WTC11 (cell line): ENCODE measurements at regions of chr3 and their contacts with region 1.

Region 1: GRCh38 chr3:23945903-23946751 is 1.0 kb downstream of the NR1D2 start:
- DNase-seq: peak; percentile 97
- ATAC-seq: peak; percentile 68
- H3K4me3 Mint-ChIP-seq: peak overlapping the region; percentile 87
- H3K27ac Mint-ChIP-seq: peak overlapping the region; percentile 99
- H3K4me1 Mint-ChIP-seq: peaks cover 40% of the 10 kb centered on the region
- H3K27me3 Mint-ChIP-seq: peaks cover 16% of the 10 kb centered on the region
- CTCF ChIP-seq: no peak

Region 2: DNA sequence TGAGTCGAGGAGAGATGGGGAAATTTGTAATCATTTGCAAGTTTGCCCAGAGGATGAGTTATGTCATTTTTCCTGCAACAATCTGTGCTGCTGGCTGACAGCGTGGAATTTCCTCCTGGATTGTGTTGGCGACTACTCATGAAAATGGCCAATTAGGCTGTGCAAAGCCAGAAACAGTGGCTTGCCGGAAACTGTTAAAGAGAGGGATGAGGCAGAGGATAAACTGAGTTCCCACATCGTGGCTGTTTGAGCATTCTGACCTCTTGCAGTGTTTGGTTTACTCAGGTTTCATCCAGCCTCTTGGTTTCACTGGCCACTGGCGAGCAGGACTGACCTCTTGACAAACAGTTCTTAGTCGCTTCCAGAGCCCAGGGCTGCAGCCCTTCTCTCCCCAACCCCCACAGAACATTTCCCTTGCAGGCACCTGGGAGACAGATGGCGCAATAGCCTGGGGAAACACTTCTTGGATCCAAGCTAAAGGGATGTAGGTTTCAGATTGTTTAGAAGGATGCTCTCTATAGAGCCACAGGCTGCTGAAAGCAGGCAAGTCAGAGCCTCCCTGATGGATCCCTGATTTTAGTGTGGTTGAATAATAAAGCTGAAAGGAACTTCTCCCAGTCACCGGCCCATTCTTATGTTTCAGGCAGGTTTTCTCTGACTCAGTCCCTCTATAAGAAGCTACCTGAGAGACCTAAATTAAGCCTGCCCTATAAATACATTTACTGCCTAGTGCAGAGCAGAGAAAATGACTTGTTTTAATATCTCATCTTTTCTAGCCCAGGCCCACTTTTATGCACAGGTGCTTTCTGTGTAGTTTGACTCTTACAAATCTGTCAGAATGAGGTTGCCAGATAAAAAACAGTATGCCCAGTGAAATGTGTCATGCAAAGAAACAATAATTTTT is 233.2 kb before region 1 on chr3:
- CTCF ChIA-PET with region 1: no interaction called
- POLR2A ChIA-PET with region 1: no interaction called
- DNase-seq: peak; percentile 74
- ATAC-seq: peak; percentile 91
- H3K4me3 Mint-ChIP-seq: no peak overlapping the region
- H3K27ac Mint-ChIP-seq: peak overlapping the region; percentile 18
- H3K4me1 Mint-ChIP-seq: peaks cover 40% of the 10 kb centered on the region
- H3K27me3 Mint-ChIP-seq: no peaks in the 10 kb centered on the region
- CTCF ChIP-seq: no peak

Region 3: DNA sequence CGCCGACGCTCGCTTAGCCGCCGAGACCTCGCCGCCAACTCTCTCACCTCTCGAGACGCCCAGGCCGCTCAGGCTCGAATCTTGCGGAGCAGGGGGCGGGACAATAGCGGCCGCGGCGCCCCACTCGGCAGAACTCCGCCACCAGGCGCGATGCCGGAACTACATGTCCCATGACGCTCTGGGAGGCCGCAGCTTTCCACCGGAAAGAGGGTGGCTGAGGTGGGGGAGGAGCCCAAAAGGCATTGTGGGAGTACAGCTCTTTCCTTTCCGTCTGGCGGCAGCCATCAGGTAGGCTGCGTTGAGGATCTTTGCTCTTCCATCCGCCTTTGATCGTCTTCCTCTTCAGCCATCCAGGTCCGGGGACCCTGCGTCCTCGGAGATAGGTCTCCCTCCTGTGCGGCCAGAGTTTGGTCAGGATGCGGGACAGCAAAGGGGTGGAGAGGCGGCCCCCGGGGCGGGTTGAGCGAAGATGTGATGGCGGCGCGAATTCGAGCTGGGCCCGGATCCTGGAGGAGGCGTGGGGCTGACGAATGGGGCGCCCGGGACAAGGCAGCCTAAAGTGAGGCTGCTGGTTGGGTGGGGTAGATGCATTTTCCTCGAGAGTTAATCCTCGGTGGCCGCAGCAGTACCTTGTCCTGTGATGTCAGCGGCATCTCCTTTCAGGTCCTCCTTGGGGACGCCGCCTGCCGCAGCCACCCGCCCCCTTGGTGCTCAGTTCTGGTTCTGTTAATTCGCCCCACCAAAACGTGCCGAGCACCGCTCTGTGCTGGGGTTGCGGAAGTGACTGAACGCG is 29.0 kb before region 1 on chr3 and contains the starts of genes NKIRAS1 and RPL15:
- CTCF ChIA-PET with region 1: interaction called, 3 read pairs
- POLR2A ChIA-PET with region 1: interaction called, 31 read pairs
- DNase-seq: peak; percentile 97
- ATAC-seq: peak; percentile 93
- H3K4me3 Mint-ChIP-seq: peak within 1 kb of the TSS; percentile 99
- H3K27ac Mint-ChIP-seq: peak within 1 kb of the TSS; percentile 98
- H3K4me1 Mint-ChIP-seq: peaks cover 45% of the 10 kb centered on the region
- H3K27me3 Mint-ChIP-seq: peaks cover 6% of the 10 kb centered on the region; the same call in 1 of the 2 replicates
- CTCF ChIP-seq: peak; percentile 36
- total RNA-seq, gene NKIRAS1: 6.6 to 7.3 TPM (median 6.8 TPM) in 3 replicates
- total RNA-seq, gene RPL15: 2,428 to 2,870 TPM (median 2,865 TPM) in 3 replicates